Activated naive CD4-positive, alpha-beta T cell treated with anti-CD3 and anti-CD28 coated beads for 36 hours (primary cell): ENCODE measurements at regions of chr22 and their contacts with region 1.

Region 1: DNA sequence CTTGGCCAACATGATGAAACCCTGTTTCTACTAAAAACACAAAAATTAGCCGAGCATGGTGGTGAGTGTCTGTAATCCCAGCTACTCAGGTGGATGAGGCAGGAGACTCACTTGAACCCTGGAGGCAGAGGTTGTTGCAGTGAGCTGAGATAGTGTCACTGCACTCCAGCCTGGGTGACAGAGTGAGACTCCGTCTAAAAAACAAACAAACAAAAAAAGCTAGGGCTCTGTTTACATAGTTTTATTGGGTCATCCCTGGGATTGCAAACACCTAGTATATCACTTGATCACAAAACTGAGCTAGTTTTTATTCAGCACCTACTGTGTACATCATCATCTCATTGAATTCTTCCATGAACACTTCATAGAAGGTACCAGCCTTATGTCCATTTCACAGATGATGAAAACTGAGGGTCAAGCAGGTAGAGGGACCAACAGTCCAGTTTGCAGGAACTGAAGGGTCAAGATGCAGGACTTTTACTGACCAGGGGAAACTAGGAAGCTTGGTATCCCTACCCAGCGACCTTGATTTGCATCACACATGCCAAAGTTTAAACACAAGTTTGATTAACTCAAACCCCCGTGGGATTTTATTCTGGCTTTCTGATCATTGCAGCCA is 9.2 kb upstream of the MRTFA start:
- DNase-seq: no peak
- H3K4me3 Mint-ChIP-seq: no peak overlapping the region
- H3K27ac Mint-ChIP-seq: no peak overlapping the region
- H3K4me1 Mint-ChIP-seq: peaks cover 4% of the 10 kb centered on the region
- H3K27me3 Mint-ChIP-seq: no peaks in the 10 kb centered on the region

Region 2: GRCh38 chr22:40525249-40525884 is 120.3 kb before region 1 on chr22:
- CTCF ChIA-PET with region 1: interaction called, 71 read pairs
- intact Hi-C with region 1: loop called (anchors 1 kb)
- DNase-seq: peak; percentile 88
- H3K4me3 Mint-ChIP-seq: no peak overlapping the region
- H3K27ac Mint-ChIP-seq: peak overlapping the region; percentile 56
- H3K4me1 Mint-ChIP-seq: peaks cover 51% of the 10 kb centered on the region
- H3K27me3 Mint-ChIP-seq: no peaks in the 10 kb centered on the region

Region 3: GRCh38 chr22:40583053-40583741 is 62.5 kb before region 1 on chr22:
- CTCF ChIA-PET with region 1: interaction called, 13 read pairs
- intact Hi-C with region 1: no loop called
- DNase-seq: peak; percentile 49
- H3K4me3 Mint-ChIP-seq: no peak overlapping the region
- H3K27ac Mint-ChIP-seq: peak overlapping the region; percentile 34
- H3K4me1 Mint-ChIP-seq: peaks cover 42% of the 10 kb centered on the region
- H3K27me3 Mint-ChIP-seq: no peaks in the 10 kb centered on the region

Region 4: GRCh38 chr22:40673017-40673416 is 27.3 kb after region 1 on chr22:
- CTCF ChIA-PET with region 1: no interaction called
- intact Hi-C with region 1: no loop called
- DNase-seq: no peak
- H3K4me3 Mint-ChIP-seq: no peak overlapping the region
- H3K27ac Mint-ChIP-seq: no peak overlapping the region
- H3K4me1 Mint-ChIP-seq: peaks cover 23% of the 10 kb centered on the region
- H3K27me3 Mint-ChIP-seq: no peaks in the 10 kb centered on the region